Testis (tissue), 5 donors: ENCODE measurements at regions of chr19 and their contacts with region 1.

Region 1: GRCh38 chr19:4278419-4279266 is at the start of gene SHD:
- DNase-seq: no peak
- H3K4me3 ChIP-seq: peak within 1 kb of the TSS; percentile 9 to 26
- H3K27ac ChIP-seq: no peak within 1 kb of the TSS
- H3K4me1 ChIP-seq: peaks cover 10% of the 10 kb centered on the region
- H3K27me3 ChIP-seq: no peaks in the 10 kb centered on the region
- CTCF ChIP-seq: no peak
- POLR2A ChIP-seq: no peak
- total RNA-seq, gene SHD: 0.16 to 1.8 TPM

Region 2: DNA sequence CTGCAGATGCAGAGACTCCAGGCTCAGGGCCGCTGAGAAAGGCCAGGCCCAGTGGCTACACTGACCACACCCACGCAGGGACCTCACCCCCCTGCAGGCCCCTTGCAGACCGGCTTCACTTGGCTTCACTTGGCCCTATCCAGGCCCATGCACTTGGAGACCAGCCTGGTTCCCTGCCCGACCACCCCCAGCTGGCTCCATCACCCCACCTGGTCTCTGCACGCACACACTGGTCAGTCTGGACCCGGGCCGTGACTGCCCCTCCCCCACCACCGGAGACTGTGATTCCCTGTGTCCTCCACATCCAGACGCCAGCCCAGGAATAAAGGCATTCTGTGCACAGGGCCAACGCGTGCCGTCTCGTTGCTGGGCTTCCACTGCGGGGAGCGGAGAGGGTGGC is 54.2 kb before region 1 on chr19:
- intact Hi-C with region 1: no loop called
- DNase-seq: no peak
- H3K4me3 ChIP-seq: no peak overlapping the region
- H3K27ac ChIP-seq: no peak overlapping the region
- H3K4me1 ChIP-seq: peaks cover 6% of the 10 kb centered on the region
- H3K27me3 ChIP-seq: no peaks in the 10 kb centered on the region
- CTCF ChIP-seq: no peak
- POLR2A ChIP-seq: no peak

Region 3: DNA sequence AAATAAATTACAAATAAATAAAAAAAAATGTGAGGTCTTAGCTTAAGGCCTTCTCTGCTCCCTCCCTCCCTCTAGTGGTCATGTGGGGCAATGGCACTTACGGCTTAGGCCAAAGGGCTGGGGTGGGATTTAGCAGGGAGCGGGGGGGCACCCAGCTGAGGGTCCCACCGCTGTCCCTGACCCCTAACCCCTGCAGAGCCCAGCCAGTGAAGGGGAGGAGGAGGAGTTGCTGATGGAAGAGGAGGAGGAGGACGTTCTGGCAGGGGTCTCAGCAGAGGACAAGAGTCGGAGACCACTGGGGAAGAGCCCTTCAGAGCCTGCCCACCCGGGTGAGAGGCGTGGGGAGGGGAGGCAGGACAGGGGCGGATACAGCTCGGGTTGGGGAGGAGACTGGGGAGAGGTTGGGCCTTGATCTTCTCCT is 74.1 kb after region 1 on chr19:
- intact Hi-C with region 1: loop called (anchors 10 kb)
- DNase-seq: peak; percentile 42
- H3K4me3 ChIP-seq: no peak overlapping the region
- H3K27ac ChIP-seq: no peak overlapping the region
- H3K4me1 ChIP-seq: no peaks in the 10 kb centered on the region
- H3K27me3 ChIP-seq: no peaks in the 10 kb centered on the region
- CTCF ChIP-seq: peak; percentile 54 to 92 (median 64)
- POLR2A ChIP-seq: no peak

Region 4: GRCh38 chr19:4400135-4400936 is 121.7 kb after region 1 on chr19 and contains the start of gene SH3GL1:
- intact Hi-C with region 1: no loop called
- DNase-seq: peak; percentile 96
- H3K4me3 ChIP-seq: peak within 1 kb of the TSS; percentile 88 to 97
- H3K27ac ChIP-seq: peak within 1 kb of the TSS; percentile 88 to 93
- H3K4me1 ChIP-seq: peaks cover 32% of the 10 kb centered on the region
- H3K27me3 ChIP-seq: no peaks in the 10 kb centered on the region
- CTCF ChIP-seq: peak; percentile 89 to 99 (median 98)
- POLR2A ChIP-seq: no peak
- total RNA-seq, gene SH3GL1: 41.6 to 53.4 TPM